Left cardiac atrium (tissue), 4 donors: ENCODE measurements at regions of chr17 and their contacts with region 1.

Region 1: GRCh38 chr17:78865682-78866390 is 25.2 kb upstream of the USP36 start:
- DNase-seq: peak; percentile 75
- ATAC-seq: peak; percentile 71 to 83

Region 2: DNA sequence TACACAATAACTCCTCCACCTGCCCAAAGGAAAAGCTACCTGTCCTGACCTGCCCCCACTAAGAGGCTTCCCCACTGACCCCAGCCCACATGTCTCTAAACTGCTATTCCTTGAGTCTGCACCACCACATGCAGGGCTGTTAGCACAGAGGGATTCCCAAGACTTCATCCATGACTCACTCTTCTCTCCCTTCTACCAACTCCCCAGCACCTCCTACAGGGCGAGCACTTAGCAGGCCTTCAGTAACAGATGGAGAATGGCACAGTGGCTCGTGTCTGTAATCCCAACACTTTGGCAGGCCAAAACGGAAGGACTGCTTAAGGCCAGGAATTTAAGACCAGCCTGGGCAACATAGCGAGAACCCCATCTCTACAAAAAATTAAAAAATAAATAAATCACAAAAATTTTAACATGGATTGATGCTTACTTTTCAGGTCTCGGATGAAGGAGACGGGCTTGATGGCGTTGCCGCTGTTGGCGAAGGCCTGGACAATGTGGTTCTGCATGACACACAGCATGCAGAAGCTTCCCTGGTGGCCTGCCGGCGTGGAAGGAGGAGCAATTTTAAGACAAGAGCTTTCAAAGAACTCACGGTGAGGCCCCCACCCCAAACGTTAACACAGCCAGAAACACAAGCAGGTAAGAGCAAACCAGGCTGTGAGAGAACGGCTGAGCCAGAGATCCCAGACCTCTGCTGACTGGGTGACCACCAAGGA is 37.2 kb before region 1 on chr17:
- intact Hi-C with region 1: no loop called
- DNase-seq: no peak
- ATAC-seq: peak in 1 of 2 donors; percentile 37

Region 3: DNA sequence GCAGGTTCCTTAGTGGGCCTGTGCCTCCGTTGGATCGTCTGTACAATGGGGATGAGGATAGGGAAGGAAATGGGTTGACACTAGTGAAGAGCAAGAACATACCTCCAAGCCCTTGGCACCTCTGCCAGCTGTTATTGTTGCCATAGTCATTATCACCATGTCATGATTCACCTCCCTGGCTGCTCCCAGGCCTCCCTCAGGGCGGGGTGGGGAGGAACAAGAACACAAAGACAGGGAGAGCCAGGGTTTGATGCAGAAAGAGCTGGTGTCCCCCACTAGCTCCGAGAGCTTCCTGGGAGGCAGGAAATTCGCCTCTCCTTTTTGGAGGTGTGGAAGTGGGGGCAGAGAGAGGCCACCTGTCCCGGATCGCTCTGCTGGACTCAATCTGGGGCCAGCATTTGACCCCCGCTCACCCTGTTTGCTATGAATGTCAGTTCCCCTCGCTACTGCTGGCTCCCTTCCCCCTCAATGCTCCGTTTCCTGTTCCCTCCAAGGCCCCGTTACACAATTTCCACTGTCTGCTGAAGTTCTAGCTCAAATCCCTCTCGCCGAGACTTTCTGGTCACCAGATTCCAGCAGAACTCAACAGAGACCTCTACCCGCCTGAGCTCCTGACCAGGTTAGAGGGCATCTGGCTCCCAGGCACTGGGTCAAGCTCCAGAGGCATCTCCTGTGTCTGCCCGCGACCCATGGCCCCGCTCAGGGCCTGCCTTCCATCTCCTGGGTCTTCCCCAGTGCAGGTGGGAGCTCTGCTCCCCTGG is 50.2 kb after region 1 on chr17:
- intact Hi-C with region 1: no loop called
- DNase-seq: peak; percentile 82
- ATAC-seq: peak; percentile 55 to 89

Region 4: GRCh38 chr17:78933959-78934568 is 68.2 kb after region 1 on chr17:
- intact Hi-C with region 1: loop called in 1 of 2 experiments (anchors 10 kb)
- DNase-seq: peak; percentile 95
- ATAC-seq: peak; percentile 82 to 92

Region 5: DNA sequence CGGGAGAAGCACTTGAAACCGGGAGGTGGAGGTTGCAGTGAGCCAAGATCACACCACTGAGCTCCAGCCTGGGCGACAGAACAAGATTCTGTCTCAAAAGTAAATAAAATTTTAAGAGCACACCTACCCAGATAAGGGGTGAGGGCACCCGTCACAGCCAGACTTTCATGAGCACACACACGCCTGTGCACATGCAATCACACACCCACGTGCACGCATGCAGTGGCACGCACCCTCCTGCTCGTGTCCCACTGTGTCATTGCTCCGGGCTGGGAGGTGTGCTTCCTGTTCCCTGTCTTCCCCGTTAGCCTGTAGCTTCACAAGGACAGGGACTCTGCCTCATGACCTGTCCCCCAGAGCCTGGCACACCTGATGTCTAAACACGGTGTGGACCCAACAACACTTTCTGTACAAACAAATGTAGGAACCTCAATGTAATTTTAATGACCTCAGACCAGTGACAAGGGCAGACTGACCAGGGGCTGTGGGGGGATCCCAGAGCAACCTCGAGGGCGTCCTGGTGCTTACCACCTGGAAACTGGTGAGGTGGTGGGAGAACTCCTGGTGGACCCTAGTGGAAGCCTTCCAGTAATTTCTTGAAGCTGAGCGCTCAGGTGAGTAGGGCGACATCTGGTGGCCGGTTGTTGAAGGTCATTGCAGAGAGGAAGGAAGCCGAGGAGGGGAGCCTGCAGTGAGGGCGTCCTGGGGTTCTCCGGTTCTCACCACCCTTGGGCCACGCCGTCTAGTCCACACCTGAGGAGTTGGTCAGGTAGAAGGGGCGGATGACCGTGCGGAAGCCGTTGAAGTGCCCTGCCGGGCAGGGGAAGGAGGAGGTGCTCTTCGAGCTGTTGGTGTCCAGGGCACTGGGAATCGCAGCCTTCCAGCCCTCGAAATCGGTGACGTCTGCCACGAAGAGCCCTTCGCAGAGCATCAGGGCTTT is 105.3 kb after region 1 on chr17:
- intact Hi-C with region 1: loop called (anchors 1 to 2 kb)
- DNase-seq: peak; percentile 88
- ATAC-seq: peak; percentile 38 to 47

Region 6: DNA sequence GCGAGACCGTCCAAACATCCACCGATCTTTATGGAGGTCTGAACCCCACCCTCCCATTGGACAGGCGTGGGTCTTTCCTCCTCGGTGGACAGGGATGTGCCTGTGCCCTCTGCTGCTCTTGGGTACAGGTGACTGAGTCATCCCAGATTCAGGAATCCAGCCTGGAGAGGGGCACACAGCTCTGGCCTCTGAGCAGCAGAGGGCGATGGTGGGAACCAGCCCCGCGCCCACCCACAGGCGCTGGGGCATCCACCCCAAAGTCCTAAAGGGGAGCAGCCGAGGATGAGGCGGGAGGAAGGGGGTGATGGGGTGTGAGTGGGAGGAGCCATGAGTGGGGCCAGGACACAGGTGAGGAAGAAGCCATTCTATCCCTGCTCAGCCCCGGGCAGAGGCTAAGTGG is 243.7 kb after region 1 on chr17:
- intact Hi-C with region 1: no loop called
- DNase-seq: no peak
- ATAC-seq: no peak